Calu3 (cell line): ENCODE measurements at regions of chr15 and their contacts with region 1.

Region 1: GRCh38 chr15:92521624-92522008 is 127.9 kb downstream of the ST8SIA2 start:
- DNase-seq: peak; percentile 82
- H3K4me3 Mint-ChIP-seq: no peak overlapping the region
- H3K27ac Mint-ChIP-seq: no peak overlapping the region
- H3K4me1 Mint-ChIP-seq: peaks cover 8% of the 10 kb centered on the region
- H3K27me3 Mint-ChIP-seq: peaks cover 30% of the 10 kb centered on the region
- CTCF ChIP-seq: peak; percentile 62

Region 2: GRCh38 chr15:92603743-92604470 is 82.3 kb after region 1 on chr15:
- CTCF ChIA-PET with region 1: no interaction called
- intact Hi-C with region 1: loop called (anchors 5 kb)
- DNase-seq: no peak
- H3K4me3 Mint-ChIP-seq: no peak overlapping the region
- H3K27ac Mint-ChIP-seq: no peak overlapping the region
- H3K4me1 Mint-ChIP-seq: peaks cover 20% of the 10 kb centered on the region
- H3K27me3 Mint-ChIP-seq: peaks cover 52% of the 10 kb centered on the region
- CTCF ChIP-seq: no peak

Region 3: DNA sequence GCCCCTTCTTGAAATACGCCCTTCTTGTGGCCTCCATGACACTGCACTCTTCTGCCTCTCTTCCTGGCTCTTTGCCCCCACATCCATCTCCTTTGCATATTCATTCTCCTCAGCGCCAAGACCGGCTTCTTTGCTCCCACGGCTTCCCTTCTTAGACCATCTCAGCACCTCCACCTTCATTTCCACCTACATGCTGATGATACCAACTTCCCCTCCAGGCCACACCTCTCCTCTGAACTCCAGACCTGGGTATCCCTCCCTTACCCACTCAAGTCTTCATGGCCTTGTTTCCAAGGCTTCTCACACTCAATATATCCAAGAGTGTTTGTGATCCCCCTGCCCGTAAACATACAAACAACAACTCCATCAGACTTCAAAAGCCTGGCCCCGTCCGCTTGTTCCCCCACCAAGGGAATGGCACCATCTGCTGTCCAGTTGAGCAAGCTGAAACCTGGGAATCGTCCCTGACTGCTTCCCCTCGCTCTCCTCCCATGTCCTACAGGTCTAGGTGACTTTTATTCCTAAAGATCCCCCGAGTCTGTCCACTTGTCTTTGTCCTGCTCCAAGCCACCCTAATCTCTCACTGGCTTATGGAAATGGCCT is 161.7 kb after region 1 on chr15:
- CTCF ChIA-PET with region 1: interaction called, 9 read pairs
- intact Hi-C with region 1: loop called (anchors 1 kb)
- DNase-seq: peak; percentile 48
- H3K4me3 Mint-ChIP-seq: no peak overlapping the region
- H3K27ac Mint-ChIP-seq: no peak overlapping the region
- H3K4me1 Mint-ChIP-seq: no peaks in the 10 kb centered on the region
- H3K27me3 Mint-ChIP-seq: peaks cover 69% of the 10 kb centered on the region
- CTCF ChIP-seq: peak; percentile 26